Head of caudate nucleus (tissue), 42 donors: ENCODE measurements at regions of chr10 and their contacts with region 1.

Region 1: DNA sequence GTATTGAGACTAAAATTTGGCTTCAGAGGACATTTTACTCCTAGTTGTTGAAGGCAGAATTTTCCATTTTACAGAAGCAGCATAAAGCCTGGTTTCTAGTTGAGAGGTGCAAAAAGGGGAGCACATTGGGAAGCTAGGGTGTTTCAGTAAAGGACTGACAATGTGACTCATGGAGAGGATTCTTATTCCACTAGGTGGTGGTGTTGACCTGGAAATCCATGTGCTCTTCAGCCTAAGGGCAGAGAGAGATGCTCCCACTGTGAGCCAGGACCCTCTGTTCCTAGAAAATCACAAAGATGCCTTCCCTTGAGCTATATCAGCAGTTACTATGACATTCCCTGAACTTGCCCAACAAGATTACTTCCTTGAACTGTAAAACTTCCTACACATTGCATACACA is 687.8 kb downstream of the IPMK start:
- DNase-seq: peak in 11 of 42 donors; percentile 3 to 40 (median 14)

Region 2: DNA sequence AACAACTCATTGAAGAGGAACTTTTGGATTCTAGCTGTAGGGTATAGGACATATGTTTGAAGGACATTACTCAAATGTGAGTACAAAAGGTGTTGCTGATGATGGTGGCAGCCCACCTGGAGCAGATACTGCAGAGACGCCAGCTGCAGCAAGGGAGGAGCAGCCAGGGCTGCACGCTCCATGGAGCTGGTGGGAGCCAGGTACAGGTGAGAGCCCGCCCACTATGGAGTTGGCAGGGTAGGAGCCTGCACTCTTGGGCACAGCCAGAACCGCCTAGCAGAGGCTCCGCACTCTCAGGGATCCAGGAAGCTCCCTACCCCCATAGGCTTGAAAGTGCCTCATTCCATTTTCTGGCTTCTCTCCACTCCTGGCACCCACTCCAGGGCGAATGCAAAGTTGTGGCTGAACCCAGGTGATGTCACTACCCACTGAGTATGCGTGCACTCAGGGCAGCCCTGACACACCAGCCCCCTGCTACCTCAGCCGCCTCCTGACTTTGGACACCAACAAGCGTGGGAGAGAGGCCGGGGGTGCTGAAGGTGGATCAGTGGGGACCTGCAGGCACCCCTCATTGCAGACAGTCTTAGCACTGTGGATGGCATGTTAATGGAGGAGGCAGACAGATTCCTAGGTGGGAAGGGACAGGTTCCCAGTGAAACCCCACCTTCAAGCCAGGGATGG is 73.4 kb before region 1 on chr10:
- intact Hi-C with region 1: no loop called
- DNase-seq: no peak

Region 3: GRCh38 chr10:57628592-57629284 is 48.8 kb after region 1 on chr10:
- intact Hi-C with region 1: no loop called
- DNase-seq: peak in 1 of 42 donors; percentile 5

Region 4: DNA sequence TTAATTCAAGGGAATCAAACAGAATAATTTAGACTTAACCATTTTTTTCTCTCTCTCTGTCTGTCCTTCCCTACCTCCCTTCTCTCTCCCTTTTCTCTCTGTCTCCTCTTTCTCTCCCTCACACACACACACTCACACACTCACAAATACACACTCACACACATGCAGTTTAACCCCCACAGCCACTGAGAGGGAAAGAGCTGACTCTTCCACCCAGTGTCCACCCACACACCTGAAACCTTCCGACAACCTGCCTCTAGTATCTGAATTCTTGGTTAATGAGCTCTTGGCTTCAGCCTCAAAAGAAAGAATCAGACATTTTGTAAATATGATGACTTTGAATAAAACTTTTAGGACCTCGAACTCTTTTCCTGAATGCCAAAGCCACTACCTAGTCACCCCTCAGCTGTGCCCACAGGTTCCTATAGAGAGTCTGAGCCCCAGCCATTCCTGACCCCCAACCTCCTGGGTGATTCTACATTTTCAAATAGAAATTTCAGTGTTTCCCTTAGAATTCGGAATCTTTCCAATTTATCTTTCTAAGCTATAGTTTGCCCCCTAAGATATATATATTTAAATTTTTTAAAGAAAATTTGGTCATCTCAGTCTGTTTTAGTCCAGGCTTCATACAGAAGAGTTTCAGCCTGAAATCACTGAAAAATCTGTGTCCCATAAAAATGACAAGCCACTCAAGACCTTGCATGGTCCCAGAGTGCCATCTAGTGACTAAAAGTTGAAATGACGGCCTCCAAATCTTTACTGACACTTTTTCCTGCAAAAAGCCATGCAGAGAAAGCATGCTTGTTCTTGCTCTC is 485.0 kb after region 1 on chr10:
- intact Hi-C with region 1: loop called (anchors 10 kb)
- DNase-seq: peak in 28 of 42 donors; percentile 4 to 85 (median 44)